Right ventricle myocardium inferior (tissue), 1 donor: ENCODE measurements at regions of chr10 and their contacts with region 1.

Region 1: DNA sequence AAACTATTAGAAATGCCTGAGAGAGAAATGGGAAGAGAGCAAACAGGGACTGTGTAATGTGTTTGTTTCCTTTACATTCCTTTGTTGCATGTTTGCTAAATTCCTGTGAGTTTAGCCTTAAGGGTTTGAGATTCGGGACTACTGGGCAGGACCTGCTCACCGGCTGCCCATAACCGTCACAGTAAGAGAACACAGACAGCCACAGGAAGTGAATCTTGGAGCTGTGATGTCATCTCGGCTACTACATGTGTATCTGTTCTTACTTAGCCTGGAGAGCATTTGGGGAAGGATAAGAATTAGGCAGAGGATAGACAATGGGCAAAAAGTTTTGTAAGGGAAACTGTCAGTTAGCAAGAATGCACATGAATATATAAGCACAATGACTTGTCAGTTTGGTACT is 485.1 kb upstream of the KLF6 start:
- DNase-seq: no peak
- ATAC-seq: peak; percentile 70

Region 2: DNA sequence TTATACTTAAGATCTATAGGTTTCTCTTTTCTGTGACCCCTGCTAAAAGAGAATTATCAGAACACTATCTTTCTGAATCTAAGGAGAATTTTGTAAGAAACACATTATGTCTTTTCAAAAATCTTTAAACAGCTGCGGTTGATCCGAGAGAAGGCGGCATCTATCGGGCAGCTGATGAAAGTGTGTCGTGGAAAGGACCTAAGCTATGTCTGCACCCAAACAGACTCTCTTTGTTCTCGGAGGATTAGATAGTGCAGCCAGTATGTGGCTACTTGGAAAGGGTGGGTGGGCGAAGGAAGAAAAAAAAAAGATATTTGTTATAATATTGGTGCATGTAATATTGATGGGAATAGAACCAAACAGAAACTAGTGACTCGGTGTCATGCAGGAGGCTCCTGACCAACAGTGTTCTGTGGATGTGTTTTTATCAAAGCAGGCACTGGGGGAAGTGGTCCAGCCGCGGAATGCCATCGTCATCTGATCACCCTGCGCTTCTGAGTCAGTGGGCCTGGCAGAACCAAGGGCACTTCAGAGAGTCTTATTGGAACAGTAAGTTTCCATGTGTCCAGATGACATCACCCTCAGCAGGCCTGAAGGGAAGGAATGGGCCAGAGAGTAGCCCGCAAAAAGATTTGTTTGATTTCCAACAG is 46.2 kb after region 1 on chr10:
- intact Hi-C with region 1: loop called (anchors 2 kb)
- DNase-seq: no peak
- ATAC-seq: peak; percentile 78